Activated T-helper 2 cell treated with anti-CD3 and anti-CD28 coated beads, Interferon-gamma antibody, Interleukin-2, Interleukin-4, amounts not matched to agents 10 μg/mL and 5 μg/mL and 100 μg/mL, durations not matched to agents 14 hours and 24 hours and 36 hours (primary cell): ENCODE measurements at regions of chr2 and their contacts with region 1.

Region 1: GRCh38 chr2:190382851-190383250 is 25.3 kb upstream of the MFSD6 start:
- DNase-seq: no peak
- H3K4me3 Mint-ChIP-seq: no peak overlapping the region
- H3K27ac Mint-ChIP-seq: no peak overlapping the region
- H3K4me1 Mint-ChIP-seq: peaks cover 2% of the 10 kb centered on the region
- H3K27me3 Mint-ChIP-seq: peaks cover 3% of the 10 kb centered on the region

Region 2: DNA sequence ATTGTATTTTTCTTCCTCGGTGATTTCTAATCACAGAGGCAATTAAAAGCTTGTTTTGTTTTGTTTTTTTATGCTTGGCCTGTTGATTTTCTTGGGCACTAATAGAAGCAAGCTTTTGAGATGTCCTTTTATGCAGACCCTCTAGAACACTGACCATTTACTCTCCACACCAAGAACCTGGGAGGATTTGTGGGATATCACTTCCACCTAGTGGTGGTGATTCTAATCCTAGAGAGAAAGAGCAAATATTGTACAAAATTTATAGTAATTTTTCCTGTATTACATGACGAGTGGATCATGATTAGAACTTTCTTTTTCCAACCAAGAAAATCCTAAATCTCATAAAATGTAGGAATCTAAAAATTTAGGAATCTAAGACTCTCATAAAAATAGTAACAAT is 128.3 kb after region 1 on chr2:
- intact Hi-C with region 1: loop called (anchors 5 kb)
- DNase-seq: no peak
- H3K4me3 Mint-ChIP-seq: no peak overlapping the region
- H3K27ac Mint-ChIP-seq: no peak overlapping the region
- H3K4me1 Mint-ChIP-seq: peaks cover 16% of the 10 kb centered on the region
- H3K27me3 Mint-ChIP-seq: no peaks in the 10 kb centered on the region

Region 3: GRCh38 chr2:190804182-190804795 is 421.4 kb after region 1 on chr2:
- intact Hi-C with region 1: loop called (anchors 2 kb)
- DNase-seq: no peak
- H3K4me3 Mint-ChIP-seq: no peak overlapping the region
- H3K27ac Mint-ChIP-seq: no peak overlapping the region
- H3K4me1 Mint-ChIP-seq: peaks cover 25% of the 10 kb centered on the region
- H3K27me3 Mint-ChIP-seq: no peaks in the 10 kb centered on the region